Spleen (tissue), 13 donors: ENCODE measurements at regions of chr17 and their contacts with region 1.

Region 1: DNA sequence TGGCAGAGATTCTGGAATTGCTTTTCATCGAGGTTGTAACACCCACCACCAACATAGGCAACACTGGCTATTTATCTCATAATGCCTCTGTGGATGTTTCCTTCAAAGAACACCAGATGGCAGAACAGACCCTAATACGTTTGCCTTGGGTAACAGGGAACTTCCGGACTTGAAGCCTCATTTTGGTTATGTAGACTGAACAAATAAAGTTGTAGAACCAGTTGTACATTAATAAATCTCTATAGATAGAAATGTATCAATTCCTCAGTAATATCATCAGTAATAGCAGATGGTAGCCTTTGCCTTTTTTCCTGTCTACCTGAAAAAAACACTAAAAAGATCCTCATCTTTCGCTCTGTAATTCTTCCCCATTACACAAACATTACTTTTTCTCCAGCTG is 25.9 kb upstream of the APOH start:
- DNase-seq: no peak
- H3K4me3 ChIP-seq: no peak overlapping the region
- H3K27ac ChIP-seq: no peak overlapping the region
- H3K4me1 ChIP-seq: peaks cover 0 to 15% (median 4%) of the 10 kb centered on the region in 6 donors
- H3K27me3 ChIP-seq: no peaks in the 10 kb centered on the region
- CTCF ChIP-seq: peak; percentile 43 to 78 (median 74)
- POLR2A ChIP-seq: no peak

Region 2: GRCh38 chr17:66567234-66568170 is 312.4 kb after region 1 on chr17:
- intact Hi-C with region 1: loop called (anchors 5 kb)
- DNase-seq: peak; percentile 90
- H3K4me3 ChIP-seq: no peak overlapping the region
- H3K27ac ChIP-seq: no peak overlapping the region
- H3K4me1 ChIP-seq: peaks cover 0 to 20% (median 5%) of the 10 kb centered on the region in 6 donors
- H3K27me3 ChIP-seq: no peaks in the 10 kb centered on the region
- CTCF ChIP-seq: peak; percentile 54 to 92 (median 82)
- POLR2A ChIP-seq: no peak

Region 3: DNA sequence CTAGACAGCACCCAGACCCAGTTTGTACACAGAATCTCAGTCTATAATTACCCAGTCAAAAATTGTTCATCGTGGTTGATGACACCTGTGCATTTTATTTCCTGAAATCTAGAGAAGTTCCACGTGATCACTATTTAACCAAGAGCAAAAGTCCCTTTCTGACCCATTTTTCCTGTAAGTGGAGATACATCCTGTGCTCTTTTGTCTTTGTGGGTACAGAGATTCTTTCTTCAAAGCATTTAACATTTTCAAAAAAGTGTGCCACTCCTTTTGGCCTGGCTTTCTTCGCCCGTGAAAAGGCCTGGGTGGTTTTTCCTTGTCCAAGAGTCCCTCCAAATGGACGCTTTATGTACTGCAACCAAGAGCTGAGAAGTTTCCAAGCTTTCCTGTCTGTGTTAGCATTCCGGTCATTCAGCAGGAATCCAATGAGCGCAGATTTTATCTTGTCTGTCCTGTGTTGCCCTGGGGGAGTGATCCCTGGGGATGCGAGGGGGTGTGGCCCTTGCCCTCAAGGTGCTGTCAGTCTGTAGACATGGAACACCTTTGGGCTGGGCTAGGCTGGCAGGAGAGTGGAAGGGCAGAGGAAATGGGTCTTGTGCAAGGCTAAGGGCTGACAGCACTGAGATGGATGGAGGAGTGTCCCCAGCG is 418.7 kb after region 1 on chr17:
- intact Hi-C with region 1: loop called (anchors 2 kb)
- DNase-seq: no peak
- H3K4me3 ChIP-seq: no peak overlapping the region
- H3K27ac ChIP-seq: peak overlapping the region in 6 of 8 donors; percentile 5 to 81 (median 56)
- H3K4me1 ChIP-seq: peaks cover 0 to 19% (median 10%) of the 10 kb centered on the region in 6 donors
- H3K27me3 ChIP-seq: no peaks in the 10 kb centered on the region
- CTCF ChIP-seq: peak in 10 of 11 experiments; percentile 41 to 68 (median 60)
- POLR2A ChIP-seq: no peak